Psoas muscle (tissue), 8 donors: ENCODE measurements at regions of chr2 and their contacts with region 1.

Region 1: GRCh38 chr2:222582928-222583327 is 73.0 kb downstream of the FARSB start:
- DNase-seq: no peak
- ATAC-seq: no peak
- H3K4me3 ChIP-seq: no peak overlapping the region
- H3K27ac ChIP-seq: no peak overlapping the region
- H3K4me1 ChIP-seq: peaks cover 2% of the 10 kb centered on the region
- H3K27me3 ChIP-seq: no peaks in the 10 kb centered on the region
- CTCF ChIP-seq: peak; percentile 5

Region 2: GRCh38 chr2:222561817-222562645 is 20.9 kb before region 1 on chr2:
- intact Hi-C with region 1: loop called in 1 of 2 experiments (anchors 2 kb)
- DNase-seq: no peak
- ATAC-seq: peak; percentile 51 to 74 (median 64)
- H3K4me3 ChIP-seq: no peak overlapping the region
- H3K27ac ChIP-seq: no peak overlapping the region
- H3K4me1 ChIP-seq: no peaks in the 10 kb centered on the region
- H3K27me3 ChIP-seq: peaks cover 0 to 1% (median 0%) of the 10 kb centered on the region in 3 donors
- CTCF ChIP-seq: peak; percentile 60

Region 3: GRCh38 chr2:222690564-222691200 is 107.8 kb after region 1 on chr2:
- intact Hi-C with region 1: no loop called
- DNase-seq: peak; percentile 67 to 85
- ATAC-seq: peak; percentile 91 to 97 (median 94)
- H3K4me3 ChIP-seq: no peak overlapping the region
- H3K27ac ChIP-seq: no peak overlapping the region
- H3K4me1 ChIP-seq: no peaks in the 10 kb centered on the region
- H3K27me3 ChIP-seq: no peaks in the 10 kb centered on the region
- CTCF ChIP-seq: peak; percentile 95

Region 4: DNA sequence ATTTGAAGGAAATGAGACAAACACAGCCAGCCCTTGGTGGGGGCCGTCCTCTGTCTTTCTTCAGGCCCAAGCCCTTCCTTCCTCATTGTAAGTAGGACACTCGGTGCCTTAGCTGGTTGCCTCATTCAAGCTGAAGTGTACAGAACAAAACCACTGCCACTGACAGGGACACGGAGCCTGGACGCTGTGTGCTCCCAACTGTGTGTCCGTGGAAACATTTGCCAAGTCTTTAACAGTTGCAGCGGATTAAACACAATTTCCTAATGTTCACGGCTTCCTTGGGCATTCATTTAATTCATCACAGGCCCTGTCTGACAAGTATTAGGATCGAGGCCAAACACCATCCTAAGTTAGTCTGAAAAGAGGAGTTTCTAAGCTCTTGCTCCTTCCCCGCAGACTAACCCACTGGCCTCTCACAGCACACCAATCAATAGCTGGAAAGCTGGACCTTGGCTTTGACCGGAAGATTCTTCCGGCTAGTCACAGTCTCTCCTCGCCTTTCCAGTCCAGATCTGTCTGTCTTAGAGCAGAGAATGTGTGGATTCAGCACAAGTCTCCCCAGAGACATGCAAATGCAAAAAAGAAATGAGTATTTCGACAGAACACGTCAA is 209.2 kb after region 1 on chr2:
- intact Hi-C with region 1: no loop called
- DNase-seq: peak; percentile 50 to 71
- ATAC-seq: peak; percentile 49 to 85 (median 73)
- H3K4me3 ChIP-seq: peak overlapping the region; percentile 16
- H3K27ac ChIP-seq: peak overlapping the region; percentile 71
- H3K4me1 ChIP-seq: peaks cover 16% of the 10 kb centered on the region
- H3K27me3 ChIP-seq: no peaks in the 10 kb centered on the region
- CTCF ChIP-seq: no peak